Caco-2 (cell line): ENCODE measurements at regions of chr15 and their contacts with region 1.

Region 1: GRCh38 chr15:29522373-29523276 is 253.0 kb upstream of the NSMCE3 start:
- DNase-seq: peak; percentile 80
- H3K4me3 ChIP-seq: no peak overlapping the region
- H3K4me3 Mint-ChIP-seq: peak overlapping the region; percentile 18
- H3K27ac Mint-ChIP-seq: no peak overlapping the region
- H3K4me1 ChIP-seq: peaks cover 14% of the 10 kb centered on the region
- H3K4me1 Mint-ChIP-seq: peaks cover 14% of the 10 kb centered on the region
- H3K27me3 ChIP-seq: no peaks in the 10 kb centered on the region
- H3K27me3 Mint-ChIP-seq: no peaks in the 10 kb centered on the region
- CTCF ChIP-seq: no peak

Region 2: DNA sequence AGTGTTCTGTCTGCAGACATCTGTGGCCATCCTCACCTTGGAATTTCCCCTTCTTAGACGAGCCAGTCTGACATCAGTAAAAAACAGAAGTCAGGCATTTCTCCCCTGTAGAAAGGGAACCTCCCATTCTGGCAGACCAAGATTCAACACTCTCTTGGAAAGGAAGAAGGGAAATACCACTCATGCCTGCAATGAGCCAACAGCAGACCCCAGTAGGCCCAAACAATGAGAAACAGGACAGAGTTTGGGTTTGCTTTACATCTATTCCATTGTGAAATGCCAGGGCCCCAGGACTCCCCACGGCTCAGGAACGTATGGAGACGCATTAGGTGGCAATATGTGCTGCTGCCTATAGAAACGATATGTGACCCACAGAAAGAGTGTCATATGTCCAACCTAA is 11.0 kb after region 1 on chr15:
- CTCF ChIA-PET with region 1: no interaction called
- POLR2A ChIA-PET with region 1: no interaction called
- intact Hi-C with region 1: loop called (anchors 1 kb)
- DNase-seq: no peak
- H3K4me3 ChIP-seq: no peak overlapping the region
- H3K4me3 Mint-ChIP-seq: no peak overlapping the region
- H3K27ac Mint-ChIP-seq: no peak overlapping the region
- H3K4me1 ChIP-seq: peaks cover 18% of the 10 kb centered on the region
- H3K4me1 Mint-ChIP-seq: no peaks in the 10 kb centered on the region
- H3K27me3 ChIP-seq: no peaks in the 10 kb centered on the region
- H3K27me3 Mint-ChIP-seq: no peaks in the 10 kb centered on the region
- CTCF ChIP-seq: no peak